ENCODE measurements at regions of chr12 and their contacts with region 1.

Region 1: GRCh38 chr12:122399592-122400373 is 22.7 kb downstream of the CLIP1 start:
- DNase-seq: peak; percentile 82

Region 2: GRCh38 chr12:122421821-122422729 is 22.3 kb after region 1 on chr12 and contains the start of gene CLIP1:
- intact Hi-C with region 1: loop called (anchors 2 kb)
- DNase-seq: peak; percentile 88
- total RNA-seq, gene CLIP1: 107 TPM

Region 3: GRCh38 chr12:122471324-122472226 is 71.8 kb after region 1 on chr12:
- intact Hi-C with region 1: loop called (anchors 1 kb)
- DNase-seq: no peak

Measured in cardiac septum (tissue), 1 donor.